ENCODE measurements at regions of chr5 and their contacts with region 1.

Region 1: DNA sequence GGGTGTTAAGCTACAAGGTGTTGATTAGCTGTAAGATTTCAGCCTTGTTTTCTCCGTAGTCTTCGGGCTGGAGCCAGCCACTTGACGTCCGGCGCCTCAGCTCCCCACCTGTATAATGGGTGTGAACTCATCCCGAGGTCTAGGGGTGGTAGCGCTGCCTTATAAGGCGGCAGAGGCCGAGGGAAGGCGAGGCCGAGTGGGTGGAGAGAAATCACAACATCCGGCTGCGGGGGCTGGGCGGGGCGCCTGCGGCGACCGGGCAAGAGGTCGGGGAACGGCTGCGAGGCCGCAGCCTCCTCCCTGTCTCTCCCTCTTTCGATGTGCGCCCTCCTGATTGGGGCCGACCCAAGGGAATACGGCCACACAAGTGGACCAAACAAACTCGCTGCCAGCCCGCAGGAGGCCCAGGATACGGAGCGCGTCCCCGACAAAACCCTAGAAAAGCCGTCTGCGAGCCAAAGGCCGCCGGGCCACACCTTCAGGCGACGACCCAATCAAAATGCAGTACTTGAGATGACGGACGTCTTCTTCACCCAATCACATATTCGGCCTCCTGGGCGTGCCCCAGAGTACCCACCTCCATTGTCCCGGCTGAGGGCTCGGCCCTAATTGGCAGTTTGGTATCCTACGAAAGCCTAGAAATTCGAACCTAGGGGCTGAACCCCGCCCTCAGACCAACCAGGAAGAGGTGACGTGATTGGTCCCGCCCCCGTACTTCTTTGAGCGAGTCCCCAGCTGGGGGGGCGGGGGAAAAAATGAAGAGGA is 493 bp upstream of the GRK6 start:
- DNase-seq: peak; percentile 99
- H3K4me3 Mint-ChIP-seq: peak overlapping the region; percentile 86
- H3K27ac Mint-ChIP-seq: peak overlapping the region; percentile 94
- H3K4me1 Mint-ChIP-seq: peaks cover 51% of the 10 kb centered on the region
- H3K27me3 Mint-ChIP-seq: no peaks in the 10 kb centered on the region

Region 2: GRCh38 chr5:177357459-177358351 is 68.3 kb before region 1 on chr5 and contains the start of gene RGS14:
- intact Hi-C with region 1: loop called (anchors 2 kb)
- DNase-seq: peak; percentile 63
- H3K4me3 Mint-ChIP-seq: peak within 1 kb of the TSS; percentile 85
- H3K27ac Mint-ChIP-seq: peak within 1 kb of the TSS; percentile 80
- H3K4me1 Mint-ChIP-seq: peaks cover 63% of the 10 kb centered on the region
- H3K27me3 Mint-ChIP-seq: no peaks in the 10 kb centered on the region
- total RNA-seq, gene RGS14: 37.8 and 41.3 TPM in 2 replicates

Region 3: GRCh38 chr5:177370488-177371119 is 55.4 kb before region 1 on chr5:
- intact Hi-C with region 1: no loop called
- DNase-seq: peak; percentile 48
- H3K4me3 Mint-ChIP-seq: peak overlapping the region; percentile 61
- H3K27ac Mint-ChIP-seq: no peak overlapping the region
- H3K4me1 Mint-ChIP-seq: peaks cover 55% of the 10 kb centered on the region
- H3K27me3 Mint-ChIP-seq: peaks cover 2% of the 10 kb centered on the region

Region 4: GRCh38 chr5:177403792-177404640 is 22.0 kb before region 1 on chr5:
- intact Hi-C with region 1: loop called (anchors 1 kb)
- DNase-seq: peak; percentile 75
- H3K4me3 Mint-ChIP-seq: peak overlapping the region; percentile 84
- H3K27ac Mint-ChIP-seq: no peak overlapping the region
- H3K4me1 Mint-ChIP-seq: peaks cover 17% of the 10 kb centered on the region
- H3K27me3 Mint-ChIP-seq: peaks cover 34% of the 10 kb centered on the region

Region 5: DNA sequence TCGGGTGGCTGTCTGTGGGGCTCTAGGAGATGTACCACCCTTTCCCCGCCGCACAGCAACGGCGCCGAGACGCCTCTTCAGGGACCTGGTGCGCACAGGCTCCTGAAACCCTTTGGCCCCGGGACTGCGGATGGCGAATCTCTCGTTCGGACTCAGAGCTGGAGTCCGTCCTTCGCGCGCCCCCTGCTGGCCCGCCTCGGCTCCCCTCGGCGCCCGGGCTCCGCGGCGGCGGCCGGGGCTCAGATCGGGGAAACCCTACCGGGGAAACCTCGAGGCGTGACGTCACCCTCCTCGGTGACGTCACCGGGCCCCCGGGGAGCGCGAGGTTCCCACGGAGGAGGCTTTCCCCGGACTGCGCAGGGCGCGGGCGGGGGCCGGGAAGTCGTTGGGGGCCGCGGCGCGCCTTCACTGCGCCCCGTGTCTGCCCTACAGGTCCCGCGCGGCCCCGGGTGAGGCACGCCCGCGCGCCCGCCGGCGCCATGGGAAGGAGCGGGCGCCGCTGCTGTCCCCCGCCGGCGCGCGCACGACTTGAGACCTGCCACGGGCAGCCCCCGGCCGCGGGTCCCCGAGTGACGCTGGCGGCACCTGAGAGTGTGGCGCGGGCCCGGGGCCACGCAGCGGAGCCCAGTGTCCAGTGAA is 28.5 kb after region 1 on chr5:
- intact Hi-C with region 1: loop called (anchors 1 kb)
- DNase-seq: peak; percentile 89
- H3K4me3 Mint-ChIP-seq: no peak overlapping the region
- H3K27ac Mint-ChIP-seq: peak overlapping the region; percentile 40
- H3K4me1 Mint-ChIP-seq: peaks cover 11% of the 10 kb centered on the region
- H3K27me3 Mint-ChIP-seq: peaks cover 18% of the 10 kb centered on the region

Measured in activated T-helper 1 cell treated with anti-CD3 and anti-CD28 coated beads, Interleukin-12 subunit alpha, Interleukin-12 subunit beta, Interleukin-2, Interleukin-4 antibody, amounts not matched to agents 30 ng/mL and 10 ng/mL and 1 ng/mL, durations not matched to agents 14 hours and 24 hours and 36 hours (primary cell).